GM12878 (cell line): ENCODE measurements at regions of chr21 and their contacts with region 1.

Region 1: DNA sequence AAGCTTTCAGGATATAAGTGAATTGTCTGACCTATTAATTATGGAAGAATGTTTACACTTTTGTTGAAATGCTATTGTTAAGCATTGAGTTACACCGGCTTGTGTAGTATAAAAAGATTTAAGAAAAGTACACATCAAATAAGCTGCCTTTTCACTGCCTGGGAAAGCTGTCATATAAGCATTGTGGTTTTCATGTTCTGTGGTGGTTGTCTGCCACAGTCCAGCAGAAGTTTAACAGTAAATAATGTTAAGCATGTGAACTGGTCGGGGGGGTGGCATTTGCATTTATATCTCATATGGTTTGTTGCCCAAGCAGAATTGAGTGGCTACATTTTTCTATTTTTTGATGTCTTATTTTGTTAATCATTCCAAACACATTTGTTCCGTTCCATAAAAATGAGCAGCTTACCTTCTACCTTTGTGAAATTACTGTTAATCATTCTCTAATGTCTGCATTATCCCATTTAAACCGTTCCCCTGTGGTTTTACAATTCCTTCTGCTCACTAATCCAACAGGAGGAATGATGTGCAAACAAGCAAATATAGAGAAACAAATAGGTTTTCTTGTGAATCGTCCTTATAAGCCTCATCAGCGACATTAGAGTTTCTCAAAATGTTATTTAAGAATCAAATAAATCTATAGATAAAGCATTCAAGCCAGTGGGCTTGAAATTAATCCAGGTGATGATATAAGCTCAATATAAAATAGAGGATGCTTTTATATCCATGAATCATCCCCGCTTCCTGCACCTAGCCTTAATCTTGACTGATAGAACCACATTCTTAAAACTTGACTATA is 160.8 kb upstream of the SAMSN1 start:
- DNase-seq: no peak
- ATAC-seq: no peak
- H3K4me3 ChIP-seq: no peak overlapping the region
- H3K27ac ChIP-seq: no peak overlapping the region
- H3K4me1 ChIP-seq: no peaks in the 10 kb centered on the region
- H3K27me3 ChIP-seq: no peaks in the 10 kb centered on the region
- CTCF ChIP-seq: no peak
- EP300 ChIP-seq: no peak
- POLR2A ChIP-seq: no peak
- RAD21 ChIP-seq: no peak

Region 2: GRCh38 chr21:14722841-14723483 is 16.1 kb after region 1 on chr21:
- CTCF ChIA-PET with region 1: interaction called, 6 read pairs
- POLR2A ChIA-PET with region 1: no interaction called
- RAD21 ChIA-PET with region 1: interaction called, 3 read pairs
- SMC1A ChIA-PET with region 1: interaction called, 11 read pairs
- in situ Hi-C with region 1: no loop called
- intact Hi-C with region 1: no loop called
- DNase-seq: peak; percentile 61
- ATAC-seq: peak; percentile 96
- H3K4me3 ChIP-seq: no peak overlapping the region
- H3K27ac ChIP-seq: no peak overlapping the region
- H3K4me1 ChIP-seq: peaks cover 9% of the 10 kb centered on the region
- H3K27me3 ChIP-seq: no peaks in the 10 kb centered on the region
- CTCF ChIP-seq: no peak
- EP300 ChIP-seq: peak; percentile 20 to 38; a peak in 1 of 4 replicates
- POLR2A ChIP-seq: no peak
- RAD21 ChIP-seq: 0 out of 2 replicates have a peak, but pooled peaks have one; percentile 1